Adrenal gland (tissue), 19 donors: ENCODE measurements at regions of chr2 and their contacts with region 1.

Region 1: GRCh38 chr2:148989882-148990493 is 48.5 kb upstream of the LYPD6B start:
- DNase-seq: peak; percentile 62 to 90 (median 68)
- H3K4me3 ChIP-seq: no peak overlapping the region
- H3K27ac ChIP-seq: no peak overlapping the region
- H3K4me1 ChIP-seq: no peaks in the 10 kb centered on the region
- H3K27me3 ChIP-seq: no peaks in the 10 kb centered on the region
- CTCF ChIP-seq: peak; percentile 63 to 91 (median 78)
- POLR2A ChIP-seq: no peak

Region 2: DNA sequence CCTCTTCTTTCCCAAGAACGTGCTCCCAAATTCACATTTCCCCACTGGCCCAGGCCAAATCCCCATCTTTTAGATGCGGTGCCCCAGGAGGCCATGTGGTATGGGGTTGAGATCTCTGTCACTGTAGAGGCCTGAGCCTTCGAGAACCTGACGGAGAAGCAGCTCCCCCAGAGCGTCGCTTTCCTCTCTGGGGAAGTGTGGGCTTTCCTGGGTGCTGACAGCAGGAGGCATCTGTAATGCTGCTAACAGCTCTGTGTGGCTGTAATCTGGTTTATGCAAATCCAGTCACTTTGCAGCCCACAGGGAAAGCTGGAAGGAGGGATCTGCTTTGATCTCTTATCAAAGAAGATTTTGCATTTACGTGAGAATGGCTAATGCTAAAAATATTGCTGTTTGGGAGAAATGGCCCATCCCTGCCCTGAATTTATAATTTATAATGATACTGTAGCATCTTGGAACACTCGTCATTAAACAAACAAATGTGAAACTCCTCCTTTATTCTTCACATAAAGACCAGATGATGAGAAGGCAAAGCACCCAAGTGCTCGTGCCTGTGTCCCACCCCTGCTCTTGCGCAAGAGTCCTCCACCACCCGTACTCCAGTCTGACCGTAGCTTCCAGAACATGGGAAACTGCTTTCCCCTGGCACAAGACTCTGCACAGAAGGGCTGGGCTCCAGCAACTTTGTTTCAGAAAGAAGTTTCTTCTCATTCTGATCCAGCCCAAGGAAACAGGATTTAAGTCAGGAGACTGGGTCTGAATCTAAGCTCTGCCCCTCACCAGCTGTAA is 455.4 kb before region 1 on chr2:
- intact Hi-C with region 1: loop called in 1 of 2 experiments (anchors 10 kb)
- DNase-seq: peak in 3 of 7 donors; percentile 17 to 49 (median 24)
- H3K4me3 ChIP-seq: no peak overlapping the region
- H3K27ac ChIP-seq: no peak overlapping the region
- H3K4me1 ChIP-seq: peaks cover 0 to 7% of the 10 kb centered on the region in 2 donors
- H3K27me3 ChIP-seq: no peaks in the 10 kb centered on the region
- CTCF ChIP-seq: no peak
- POLR2A ChIP-seq: no peak

Region 3: GRCh38 chr2:148634749-148635148 is 355.2 kb before region 1 on chr2:
- intact Hi-C with region 1: loop called in 1 of 2 experiments (anchors 10 kb)
- DNase-seq: no peak
- H3K4me3 ChIP-seq: no peak overlapping the region
- H3K27ac ChIP-seq: no peak overlapping the region
- H3K4me1 ChIP-seq: no peaks in the 10 kb centered on the region
- H3K27me3 ChIP-seq: no peaks in the 10 kb centered on the region
- CTCF ChIP-seq: no peak
- POLR2A ChIP-seq: no peak

Region 4: GRCh38 chr2:148644883-148645538 is 345.0 kb before region 1 on chr2:
- intact Hi-C with region 1: loop called in 1 of 2 experiments (anchors 10 kb)
- DNase-seq: peak; percentile 92 to 97 (median 94)
- H3K4me3 ChIP-seq: peak overlapping the region; percentile 72 to 99 (median 90)
- H3K27ac ChIP-seq: peak overlapping the region; percentile 84 to 100 (median 99)
- H3K4me1 ChIP-seq: peaks cover 5 to 36% of the 10 kb centered on the region in 2 donors
- H3K27me3 ChIP-seq: no peaks in the 10 kb centered on the region
- CTCF ChIP-seq: peak; percentile 33 to 59 (median 52)
- POLR2A ChIP-seq: peak in 1 of 2 donors; percentile 17